Dendritic cell treated with granulocyte-macrophage colony-stimulating factor and Interleukin-4, amounts not matched to agents 40 ng/mL and 50 ng/mL, for 4 days (primary cell): ENCODE measurements at regions of chr5 and their contacts with region 1.

Region 1: DNA sequence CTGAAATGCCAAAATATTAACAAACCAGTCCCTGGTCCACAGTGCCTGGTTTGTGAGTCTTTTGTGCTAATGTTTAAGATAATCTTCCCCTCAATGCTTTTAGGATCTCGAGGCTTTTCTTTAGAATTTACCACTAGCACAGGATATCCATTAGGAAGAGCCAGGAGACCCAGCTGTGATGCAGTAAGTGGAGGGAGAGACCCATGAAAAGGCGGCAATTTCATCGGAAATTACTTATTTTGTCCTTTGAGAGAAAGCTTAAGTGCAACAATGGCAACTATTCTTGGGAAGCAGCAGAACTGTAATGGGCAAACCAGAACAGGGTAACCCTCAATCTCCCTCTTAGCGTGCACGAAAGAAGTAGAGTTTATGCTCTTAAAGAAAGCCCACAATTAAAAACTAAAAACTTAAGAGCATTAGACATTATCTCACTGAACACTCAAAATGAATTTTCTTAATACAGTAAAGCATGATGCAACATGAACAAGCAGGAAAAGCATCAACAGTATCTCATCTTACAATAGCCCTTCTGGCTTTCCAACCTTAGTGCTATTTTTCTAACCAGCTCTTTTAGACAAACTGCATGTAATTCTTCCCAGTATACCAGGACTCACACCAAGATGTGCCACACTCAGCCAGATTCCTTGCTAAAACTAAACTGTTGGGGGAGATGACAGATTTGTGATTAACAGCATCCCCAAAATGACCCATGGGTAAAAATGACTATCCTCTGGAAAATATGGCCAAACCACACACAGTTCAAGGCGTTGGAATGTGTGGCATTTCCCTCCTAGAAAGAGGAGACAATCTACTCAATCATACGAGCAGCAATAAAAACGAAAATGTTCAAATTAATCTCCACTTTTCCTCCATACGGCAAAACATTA is 36.4 kb downstream of the PWWP2A start:
- H3K4me3 Mint-ChIP-seq: no peak overlapping the region
- H3K27ac Mint-ChIP-seq: no peak overlapping the region
- H3K4me1 Mint-ChIP-seq: no peaks in the 10 kb centered on the region
- H3K27me3 Mint-ChIP-seq: no peaks in the 10 kb centered on the region

Region 2: GRCh38 chr5:160119142-160119904 is 36.5 kb after region 1 on chr5 and contains the start of gene PWWP2A:
- intact Hi-C with region 1: loop called (anchors 5 kb)
- H3K4me3 Mint-ChIP-seq: peak within 1 kb of the TSS; percentile 87
- H3K27ac Mint-ChIP-seq: peak within 1 kb of the TSS; percentile 91
- H3K4me1 Mint-ChIP-seq: peaks cover 8% of the 10 kb centered on the region
- H3K27me3 Mint-ChIP-seq: peaks cover 12% of the 10 kb centered on the region

Region 3: DNA sequence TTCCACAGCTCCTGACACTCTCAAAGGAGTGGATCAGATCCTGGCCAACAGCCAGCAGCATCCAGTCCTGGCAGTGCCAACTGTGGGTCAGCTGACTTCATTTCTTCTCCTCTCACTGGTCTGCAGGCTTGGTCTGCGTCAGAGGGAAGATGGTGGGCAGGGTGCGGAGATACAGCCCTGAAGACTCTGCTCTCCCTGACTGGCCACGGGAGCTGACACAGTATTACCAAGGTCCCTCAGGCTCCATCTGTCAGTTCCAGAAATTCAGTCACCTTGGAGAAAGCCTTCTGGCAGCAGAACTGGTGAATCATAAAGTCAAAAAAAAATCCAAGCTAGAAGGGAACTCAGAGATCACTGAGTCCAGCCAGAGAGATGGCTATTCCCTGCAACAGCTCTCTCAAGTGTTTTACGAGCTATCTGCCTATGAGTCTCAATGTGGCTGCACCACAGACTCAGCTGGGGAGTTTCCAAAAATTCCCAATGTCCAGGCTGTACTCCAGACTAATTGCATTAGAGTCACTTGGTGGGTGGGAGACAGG is 259.6 kb after region 1 on chr5:
- intact Hi-C with region 1: loop called (anchors 2 kb)
- H3K4me3 Mint-ChIP-seq: no peak overlapping the region
- H3K27ac Mint-ChIP-seq: no peak overlapping the region
- H3K4me1 Mint-ChIP-seq: no peaks in the 10 kb centered on the region
- H3K27me3 Mint-ChIP-seq: peaks cover 9% of the 10 kb centered on the region

Region 4: DNA sequence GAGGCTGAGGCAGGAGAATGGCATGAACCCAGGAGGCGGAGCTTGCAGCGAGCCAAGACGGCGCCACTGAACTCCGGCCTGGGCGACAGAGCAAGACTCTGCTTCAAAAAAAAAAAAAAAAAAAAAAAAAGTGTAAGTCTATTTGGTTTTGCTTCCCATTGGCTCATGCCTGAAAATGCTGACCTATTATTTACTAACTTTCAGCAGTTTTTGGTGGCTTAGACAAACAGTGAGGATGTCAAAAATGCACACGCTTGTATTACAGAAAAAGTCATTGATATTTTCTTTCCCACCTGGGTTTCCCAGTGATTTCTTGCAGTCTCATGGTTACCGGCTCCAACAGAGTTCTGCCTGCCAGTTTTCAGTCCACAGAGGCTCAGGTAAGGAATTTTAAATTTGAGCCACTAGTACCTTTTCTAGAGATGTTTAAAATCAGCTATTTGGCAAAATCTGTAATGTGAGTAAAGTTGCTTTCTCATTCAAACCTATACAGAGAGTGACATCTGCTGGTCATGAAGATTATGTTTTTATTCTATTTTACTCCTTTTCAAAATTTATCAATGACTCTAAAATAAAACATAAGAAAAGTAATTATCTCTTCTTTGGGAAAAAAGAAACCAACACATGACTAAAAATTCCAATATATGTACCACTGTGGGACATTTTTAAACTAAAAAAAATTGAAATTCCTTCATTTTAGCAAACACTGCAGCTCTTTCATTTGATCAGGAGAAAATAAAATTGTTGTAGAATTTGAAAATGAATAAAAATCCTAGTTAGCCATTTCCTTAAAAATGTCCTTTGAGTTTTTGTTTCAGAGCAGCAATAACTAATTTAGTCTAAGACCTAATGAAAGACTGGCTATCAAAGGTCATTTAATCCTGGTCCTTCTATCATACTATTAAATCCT is 308.2 kb after region 1 on chr5:
- intact Hi-C with region 1: loop called (anchors 5 kb)
- H3K4me3 Mint-ChIP-seq: no peak overlapping the region
- H3K27ac Mint-ChIP-seq: no peak overlapping the region
- H3K4me1 Mint-ChIP-seq: no peaks in the 10 kb centered on the region
- H3K27me3 Mint-ChIP-seq: no peaks in the 10 kb centered on the region